ENCODE measurements at regions of chr13 and their contacts with region 1.

Region 1: GRCh38 chr13:62512194-62513141 is 1096.8 kb upstream of the PCDH20 start:
- DNase-seq: peak; percentile 28
- CTCF ChIP-seq: peak; percentile 80

Region 2: GRCh38 chr13:62524061-62524460 is 11.6 kb after region 1 on chr13:
- CTCF ChIA-PET with region 1: interaction called, 51 read pairs
- POLR2A ChIA-PET with region 1: no interaction called
- DNase-seq: peak; percentile 10
- CTCF ChIP-seq: no peak

Region 3: DNA sequence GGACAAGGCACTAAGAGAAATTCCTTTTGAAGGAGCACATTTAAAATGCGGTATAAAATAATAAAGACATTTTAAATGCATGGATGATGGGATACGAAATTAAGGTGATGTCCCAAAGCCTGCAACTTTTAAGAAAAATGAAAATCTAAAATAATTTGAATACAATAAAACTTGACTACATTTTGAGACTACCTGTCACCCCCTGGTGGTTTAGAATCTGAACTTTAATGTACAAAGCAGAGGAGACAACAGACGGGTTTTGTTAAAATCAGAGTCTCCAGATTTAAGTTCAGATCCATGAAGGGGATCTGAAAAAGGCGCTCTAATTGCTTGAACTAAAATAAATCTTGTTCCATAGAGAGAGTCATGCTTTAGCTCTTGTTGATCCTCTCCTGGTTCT is 32.5 kb after region 1 on chr13:
- CTCF ChIA-PET with region 1: interaction called, 16 read pairs
- POLR2A ChIA-PET with region 1: no interaction called
- DNase-seq: no peak
- CTCF ChIP-seq: no peak